ENCODE measurements at regions of chr12 and their contacts with region 1.

Region 1: GRCh38 chr12:111812881-111813741 is 28.9 kb upstream of the MAPKAPK5 start:
- DNase-seq: peak; percentile 44
- ATAC-seq: peak; percentile 99
- H3K4me3 ChIP-seq: no peak overlapping the region
- H3K27ac ChIP-seq: no peak overlapping the region
- H3K4me1 ChIP-seq: peaks cover 3% of the 10 kb centered on the region; the same call in 1 of the 2 replicates
- H3K27me3 ChIP-seq: no peaks in the 10 kb centered on the region
- CTCF ChIP-seq: peak; percentile 80 to 89 (median 80)
- EP300 ChIP-seq: no peak
- POLR2A ChIP-seq: no peak
- RAD21 ChIP-seq: peak; percentile 83

Region 2: DNA sequence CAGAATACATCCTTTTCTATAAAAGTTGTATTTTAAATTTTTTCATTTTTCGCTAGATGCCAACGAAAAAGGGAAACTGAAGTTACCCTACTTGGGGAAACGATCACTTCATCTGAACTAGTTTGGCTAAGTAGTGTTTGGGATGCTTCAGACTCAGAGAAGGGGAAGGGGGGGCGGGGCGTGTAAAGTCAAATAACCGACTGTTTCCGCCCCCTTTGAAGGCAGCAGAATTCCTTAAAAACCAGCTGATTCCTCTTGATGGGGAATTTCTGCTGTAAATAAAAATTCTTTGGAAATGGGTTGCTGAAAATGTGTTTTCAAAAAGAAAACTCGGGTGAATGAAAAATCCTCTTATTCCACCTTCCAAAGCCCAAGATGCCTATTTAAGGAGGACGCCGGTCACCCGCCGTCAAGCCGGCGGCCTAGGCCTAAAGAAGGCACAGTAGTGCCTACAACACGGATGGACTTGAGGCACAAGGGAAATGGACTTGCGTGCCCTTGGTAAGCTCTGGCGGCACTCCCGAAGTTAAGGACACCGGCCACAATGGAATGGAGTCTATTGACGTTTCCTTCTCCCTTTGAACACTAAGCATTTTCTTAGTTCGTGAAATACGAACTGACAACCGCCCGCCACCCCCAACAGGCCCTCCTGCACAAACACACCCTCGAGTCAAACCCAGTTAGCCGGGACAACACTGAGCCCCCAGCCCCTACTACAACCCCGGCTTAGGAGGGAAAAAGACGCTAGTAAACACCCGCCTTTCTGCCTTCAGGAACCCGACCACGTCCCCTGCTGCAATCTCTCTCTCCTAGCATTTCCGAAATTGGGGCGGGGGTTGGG is 215.9 kb before region 1 on chr12:
- CTCF ChIA-PET with region 1: no interaction called
- POLR2A ChIA-PET with region 1: no interaction called
- RAD21 ChIA-PET with region 1: no interaction called
- SMC1A ChIA-PET with region 1: no interaction called
- in situ Hi-C with region 1: no loop called
- intact Hi-C with region 1: no loop called
- DNase-seq: no peak
- ATAC-seq: peak; percentile 26
- H3K4me3 ChIP-seq: peak overlapping the region; percentile 99
- H3K27ac ChIP-seq: peak overlapping the region; percentile 96
- H3K4me1 ChIP-seq: no peaks in the 10 kb centered on the region
- H3K27me3 ChIP-seq: no peaks in the 10 kb centered on the region
- CTCF ChIP-seq: no peak
- EP300 ChIP-seq: no peak
- POLR2A ChIP-seq: no peak
- RAD21 ChIP-seq: no peak

Region 3: DNA sequence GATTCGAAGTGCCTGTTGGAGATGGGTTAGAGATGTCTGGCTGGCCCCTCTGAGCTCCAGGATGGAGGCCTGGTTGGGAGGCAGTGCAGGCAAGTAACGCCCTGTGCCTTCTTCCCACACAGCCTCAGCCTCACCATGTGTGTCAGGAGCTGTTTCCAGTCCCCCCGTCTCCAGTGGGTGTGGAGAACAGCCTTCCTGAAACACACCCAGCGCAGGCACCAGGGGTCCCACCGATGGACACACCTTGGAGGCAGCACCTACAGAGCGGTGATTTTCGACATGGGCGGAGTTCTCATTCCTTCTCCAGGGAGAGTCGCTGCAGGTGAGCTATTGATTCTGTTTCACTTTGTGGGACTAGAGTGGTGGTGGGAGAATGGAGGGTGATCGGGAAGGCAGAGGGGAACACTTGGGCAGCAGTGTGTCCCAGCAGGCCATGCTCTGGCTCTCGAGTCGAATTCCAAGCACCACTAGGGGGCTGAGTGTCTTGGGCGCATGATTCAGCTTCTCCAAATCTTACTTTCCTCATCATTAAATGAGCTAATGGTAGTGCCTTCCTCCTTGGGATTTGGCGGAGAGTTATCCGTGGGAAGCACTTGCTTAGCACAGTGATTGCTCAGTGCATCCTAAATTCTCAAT is 120.4 kb before region 1 on chr12:
- CTCF ChIA-PET with region 1: interaction called, 17 read pairs
- POLR2A ChIA-PET with region 1: no interaction called
- RAD21 ChIA-PET with region 1: interaction called, 8 read pairs
- SMC1A ChIA-PET with region 1: interaction called, 7 read pairs
- in situ Hi-C with region 1: loop called (anchors 5 kb)
- intact Hi-C with region 1: loop called (anchors 2 kb)
- DNase-seq: no peak
- ATAC-seq: peak; percentile 35; the same call in 1 of the 3 replicates
- H3K4me3 ChIP-seq: no peak overlapping the region
- H3K27ac ChIP-seq: no peak overlapping the region
- H3K4me1 ChIP-seq: peaks cover 2% of the 10 kb centered on the region; the same call in 1 of the 2 replicates
- H3K27me3 ChIP-seq: no peaks in the 10 kb centered on the region
- CTCF ChIP-seq: peak in 2 of 3 experiments; percentile 15 to 19; a peak in 1 of 6 replicates
- EP300 ChIP-seq: no peak
- POLR2A ChIP-seq: no peak
- RAD21 ChIP-seq: no peak

Region 4: DNA sequence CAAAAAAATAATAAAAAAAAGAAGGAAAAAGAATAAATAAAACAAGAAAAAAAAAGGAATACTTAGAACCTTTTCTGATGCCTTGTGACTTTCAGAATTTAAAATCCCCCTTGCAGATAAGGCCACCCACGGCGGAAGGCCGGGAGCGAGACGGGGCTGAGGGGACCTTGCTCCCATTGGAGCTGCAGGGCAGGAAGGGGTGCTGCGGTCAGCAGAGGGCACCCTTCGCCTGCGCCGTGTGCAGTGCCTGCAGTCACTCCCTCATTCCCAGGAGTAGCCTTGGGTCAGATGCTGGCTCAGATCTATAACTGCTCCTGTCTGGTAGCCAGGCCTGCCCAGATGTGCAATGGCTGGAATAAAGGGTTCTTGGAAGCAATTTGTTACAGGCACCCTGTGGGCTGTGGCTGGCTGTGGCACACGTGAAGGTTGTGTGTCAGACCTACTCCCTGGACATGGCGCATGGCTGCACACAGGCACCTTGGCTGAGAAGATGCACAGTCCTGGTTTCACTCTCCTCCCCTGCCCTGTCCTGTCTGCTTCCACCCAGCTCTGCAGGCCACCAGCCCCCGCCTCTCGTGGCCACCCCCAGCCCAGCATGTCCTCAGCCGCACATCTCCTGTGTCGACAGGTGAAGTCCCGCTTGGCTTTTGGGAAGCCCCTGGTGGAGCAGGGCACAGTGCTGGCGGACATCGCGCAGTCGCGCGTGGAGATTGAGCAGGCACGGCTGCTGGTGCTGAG is 59.8 kb before region 1 on chr12:
- CTCF ChIA-PET with region 1: interaction called, 170 read pairs
- POLR2A ChIA-PET with region 1: interaction called, 4 read pairs
- RAD21 ChIA-PET with region 1: interaction called, 59 read pairs
- SMC1A ChIA-PET with region 1: interaction called, 89 read pairs
- in situ Hi-C with region 1: loop called (anchors 10 kb)
- intact Hi-C with region 1: loop called (anchors 1 kb)
- DNase-seq: no peak
- ATAC-seq: peak; percentile 77
- H3K4me3 ChIP-seq: no peak overlapping the region
- H3K27ac ChIP-seq: no peak overlapping the region
- H3K4me1 ChIP-seq: peaks cover 11% of the 10 kb centered on the region
- H3K27me3 ChIP-seq: no peaks in the 10 kb centered on the region
- CTCF ChIP-seq: peak; percentile 77 to 92 (median 81)
- EP300 ChIP-seq: no peak
- POLR2A ChIP-seq: 0 out of 2 replicates have a peak, but pooled peaks have one; percentile 16
- RAD21 ChIP-seq: peak; percentile 76

Region 5: GRCh38 chr12:111766608-111767361 is 46.3 kb before region 1 on chr12 and contains the start of gene ALDH2:
- CTCF ChIA-PET with region 1: interaction called, 25 read pairs
- POLR2A ChIA-PET with region 1: interaction called, 4 read pairs
- RAD21 ChIA-PET with region 1: interaction called, 17 read pairs
- SMC1A ChIA-PET with region 1: interaction called, 15 read pairs
- in situ Hi-C with region 1: no loop called
- intact Hi-C with region 1: no loop called
- DNase-seq: no peak
- ATAC-seq: peak; percentile 61
- H3K4me3 ChIP-seq: peak within 1 kb of the TSS; percentile 59; the same call in 1 of the 2 replicates
- H3K27ac ChIP-seq: peak within 1 kb of the TSS; percentile 65
- H3K4me1 ChIP-seq: peaks cover 46% of the 10 kb centered on the region
- H3K27me3 ChIP-seq: no peaks in the 10 kb centered on the region
- CTCF ChIP-seq: no peak; a peak in 1 of 6 replicates
- EP300 ChIP-seq: no peak
- POLR2A ChIP-seq: peak; percentile 66
- RAD21 ChIP-seq: no peak
- polyA plus RNA-seq, gene ALDH2: 1.8 to 4.9 TPM

Region 6: GRCh38 chr12:111788178-111788654 is 24.9 kb before region 1 on chr12:
- CTCF ChIA-PET with region 1: interaction called, 17 read pairs
- POLR2A ChIA-PET with region 1: interaction called, 6 read pairs
- RAD21 ChIA-PET with region 1: interaction called, 5 read pairs
- SMC1A ChIA-PET with region 1: interaction called, 12 read pairs
- in situ Hi-C with region 1: no loop called
- intact Hi-C with region 1: no loop called
- DNase-seq: no peak
- ATAC-seq: peak; percentile 98
- H3K4me3 ChIP-seq: no peak overlapping the region
- H3K27ac ChIP-seq: no peak overlapping the region
- H3K4me1 ChIP-seq: no peaks in the 10 kb centered on the region
- H3K27me3 ChIP-seq: no peaks in the 10 kb centered on the region
- CTCF ChIP-seq: peak; percentile 57 to 83 (median 69)
- EP300 ChIP-seq: no peak
- POLR2A ChIP-seq: no peak
- RAD21 ChIP-seq: peak; percentile 79

Region 7: DNA sequence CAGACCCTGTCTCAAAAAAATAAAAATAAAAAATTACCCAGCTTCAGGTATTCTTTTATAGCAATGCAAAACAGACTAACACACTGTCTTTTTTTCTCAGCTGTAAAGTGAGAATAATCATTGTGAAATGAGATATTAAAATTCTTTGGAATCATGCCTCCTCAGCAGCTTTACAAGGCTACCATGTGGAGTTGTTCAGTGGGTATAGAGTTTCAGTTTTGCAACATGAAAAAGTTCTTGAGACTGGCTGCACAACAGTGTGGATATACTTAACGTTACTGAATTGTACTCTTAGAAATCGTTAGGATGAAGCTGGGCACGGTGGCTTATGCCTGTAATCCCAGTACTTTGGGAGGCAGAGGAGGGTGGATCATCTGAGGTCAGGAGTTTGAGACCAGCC is 13.2 kb after region 1 on chr12:
- CTCF ChIA-PET with region 1: interaction called, 12 read pairs
- POLR2A ChIA-PET with region 1: no interaction called
- RAD21 ChIA-PET with region 1: no interaction called
- SMC1A ChIA-PET with region 1: interaction called, 7 read pairs
- in situ Hi-C with region 1: no loop called
- intact Hi-C with region 1: no loop called
- DNase-seq: no peak
- ATAC-seq: no peak
- H3K4me3 ChIP-seq: no peak overlapping the region
- H3K27ac ChIP-seq: no peak overlapping the region
- H3K4me1 ChIP-seq: no peaks in the 10 kb centered on the region
- H3K27me3 ChIP-seq: no peaks in the 10 kb centered on the region
- CTCF ChIP-seq: no peak
- EP300 ChIP-seq: no peak
- POLR2A ChIP-seq: no peak
- RAD21 ChIP-seq: no peak

Region 8: GRCh38 chr12:111927346-111927745 is 114.2 kb after region 1 on chr12:
- CTCF ChIA-PET with region 1: no interaction called
- POLR2A ChIA-PET with region 1: no interaction called
- RAD21 ChIA-PET with region 1: no interaction called
- SMC1A ChIA-PET with region 1: no interaction called
- in situ Hi-C with region 1: no loop called
- intact Hi-C with region 1: no loop called
- DNase-seq: no peak
- ATAC-seq: no peak
- H3K4me3 ChIP-seq: no peak overlapping the region
- H3K27ac ChIP-seq: no peak overlapping the region
- H3K4me1 ChIP-seq: no peaks in the 10 kb centered on the region
- H3K27me3 ChIP-seq: no peaks in the 10 kb centered on the region
- CTCF ChIP-seq: no peak
- EP300 ChIP-seq: no peak
- POLR2A ChIP-seq: no peak
- RAD21 ChIP-seq: no peak

Region 9: DNA sequence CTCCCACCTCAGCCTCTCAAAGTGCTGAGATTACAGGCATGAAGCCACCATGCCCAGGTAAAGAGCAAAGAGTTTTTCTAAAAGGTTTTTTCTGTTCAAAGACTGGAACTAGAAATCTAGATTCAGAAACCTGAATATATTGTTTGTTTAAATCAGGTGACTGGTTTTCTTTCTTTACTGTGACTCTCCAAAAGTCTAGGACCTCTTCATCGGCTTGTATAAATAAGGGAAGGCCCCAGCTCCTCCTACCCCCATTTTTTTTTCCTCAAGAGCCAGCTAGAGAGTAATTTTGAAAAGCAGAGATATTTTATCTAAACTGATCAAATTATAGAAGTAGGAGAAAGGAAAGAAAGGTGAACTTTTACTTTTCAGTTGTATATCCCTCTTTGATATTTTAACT is 151.8 kb after region 1 on chr12:
- CTCF ChIA-PET with region 1: no interaction called
- POLR2A ChIA-PET with region 1: no interaction called
- RAD21 ChIA-PET with region 1: no interaction called
- SMC1A ChIA-PET with region 1: no interaction called
- in situ Hi-C with region 1: no loop called
- intact Hi-C with region 1: no loop called
- DNase-seq: no peak
- ATAC-seq: no peak
- H3K4me3 ChIP-seq: no peak overlapping the region
- H3K27ac ChIP-seq: no peak overlapping the region
- H3K4me1 ChIP-seq: no peaks in the 10 kb centered on the region
- H3K27me3 ChIP-seq: no peaks in the 10 kb centered on the region
- CTCF ChIP-seq: no peak
- EP300 ChIP-seq: no peak
- POLR2A ChIP-seq: no peak
- RAD21 ChIP-seq: no peak